ENCODE measurements at regions of chr11 and their contacts with region 1.

Region 1: GRCh38 chr11:16738193-16738946 is at the start of gene C11orf58:
- DNase-seq: peak; percentile 96
- H3K4me3 Mint-ChIP-seq: peak within 1 kb of the TSS; percentile 66
- H3K27ac Mint-ChIP-seq: peak within 1 kb of the TSS; percentile 44
- H3K4me1 Mint-ChIP-seq: peaks cover 18% of the 10 kb centered on the region
- H3K27me3 Mint-ChIP-seq: no peaks in the 10 kb centered on the region
- total RNA-seq, gene C11orf58: 113 to 124 TPM

Region 2: GRCh38 chr11:16750417-16750816 is 12.0 kb after region 1 on chr11:
- CTCF ChIA-PET with region 1: interaction called, 6 read pairs
- POLR2A ChIA-PET with region 1: interaction called, 56 read pairs
- DNase-seq: no peak
- H3K4me3 Mint-ChIP-seq: no peak overlapping the region
- H3K27ac Mint-ChIP-seq: no peak overlapping the region
- H3K4me1 Mint-ChIP-seq: peaks cover 27% of the 10 kb centered on the region
- H3K27me3 Mint-ChIP-seq: no peaks in the 10 kb centered on the region

Region 3: GRCh38 chr11:17077520-17078401 is 339.4 kb after region 1 on chr11 and contains the start of gene RPS13:
- CTCF ChIA-PET with region 1: interaction called, 4 read pairs
- POLR2A ChIA-PET with region 1: interaction called, 31 read pairs
- DNase-seq: peak; percentile 96
- H3K4me3 Mint-ChIP-seq: peak within 1 kb of the TSS; percentile 96
- H3K27ac Mint-ChIP-seq: peak within 1 kb of the TSS; percentile 96
- H3K4me1 Mint-ChIP-seq: peaks cover 49% of the 10 kb centered on the region
- H3K27me3 Mint-ChIP-seq: no peaks in the 10 kb centered on the region
- total RNA-seq, gene RPS13: 951 to 981 TPM

Measured in activated CD4-positive, alpha-beta memory T cell treated with anti-CD3 and anti-CD28 coated beads, Interleukin-2, amount 10 ng/mL, durations not matched to agents 7 days and 5 days (primary cell).